A549 (cell line): ENCODE measurements at regions of chr15 and their contacts with region 1.

Region 1: DNA sequence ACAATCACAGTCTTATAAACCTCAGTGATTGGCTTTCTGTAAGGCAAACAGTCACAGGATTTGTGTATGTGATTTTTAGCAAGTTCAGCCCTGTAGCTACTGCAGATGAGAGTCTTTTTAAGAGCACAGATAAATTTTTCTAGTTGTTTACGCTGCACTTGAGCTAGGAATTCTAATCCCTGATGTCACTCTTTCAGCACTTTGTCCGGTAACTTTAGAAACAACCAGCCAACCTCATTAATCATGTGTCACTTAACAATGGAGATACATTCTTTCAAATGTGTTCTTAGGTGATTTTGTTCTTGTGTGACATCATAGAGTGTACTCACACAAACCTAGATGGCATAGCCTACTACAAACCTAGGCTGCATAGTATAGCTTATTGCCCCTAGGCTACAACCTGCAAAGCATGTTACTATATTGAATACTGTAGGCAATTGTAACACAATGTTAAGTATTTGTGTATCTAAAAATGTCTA is 36.8 kb upstream of the GOLGA6L2 start:
- DNase-seq: peak; percentile 31 to 95
- ATAC-seq: peak; percentile 80 to 92
- H3K4me3 ChIP-seq: no peak overlapping the region
- H3K27ac ChIP-seq: peak overlapping the region; percentile 80 to 82
- H3K4me1 ChIP-seq: peaks cover 36% of the 10 kb centered on the region
- CTCF ChIP-seq: no peak
- EP300 ChIP-seq: peak; percentile 82 to 83; a peak in 4 of 5 replicates
- POLR2A ChIP-seq: no peak
- RAD21 ChIP-seq: peak; percentile 13 to 15; a peak in 1 of 5 replicates

Region 2: GRCh38 chr15:23467110-23467600 is 16.7 kb before region 1 on chr15:
- CTCF ChIA-PET with region 1: interaction called, 10 read pairs
- POLR2A ChIA-PET with region 1: no interaction called
- DNase-seq: peak; percentile 44 to 65
- ATAC-seq: peak; percentile 85 to 86; a peak in 5 of 6 replicates
- H3K4me3 ChIP-seq: no peak overlapping the region
- H3K27ac ChIP-seq: peak overlapping the region; percentile 5 to 61; a peak in 2 of 6 replicates
- H3K4me1 ChIP-seq: peaks cover 12% of the 10 kb centered on the region
- CTCF ChIP-seq: peak; percentile 78
- EP300 ChIP-seq: no peak
- POLR2A ChIP-seq: no peak
- RAD21 ChIP-seq: peak; percentile 82 to 90

Region 3: DNA sequence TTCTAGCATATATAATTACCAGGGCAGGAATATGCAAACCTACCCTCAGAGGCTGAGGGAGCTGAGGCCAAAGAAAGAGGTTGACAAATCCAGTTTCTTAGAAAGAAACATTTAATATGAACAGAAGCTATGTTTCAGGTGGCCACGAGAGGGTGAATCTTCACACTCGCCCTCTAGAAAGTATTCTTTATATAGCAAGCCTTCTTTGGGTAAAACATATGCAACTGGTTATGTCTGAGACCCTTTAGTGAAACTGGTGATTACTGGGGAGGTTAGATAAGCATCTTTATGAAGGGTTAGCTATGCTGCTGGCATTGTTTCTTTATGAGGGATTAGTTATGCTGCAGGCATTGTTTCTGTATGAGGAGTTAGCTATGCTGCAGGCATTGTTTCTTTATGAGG is 13.9 kb after region 1 on chr15:
- CTCF ChIA-PET with region 1: interaction called, 11 read pairs
- POLR2A ChIA-PET with region 1: no interaction called
- DNase-seq: peak in 1 of 2 experiments; percentile 54
- ATAC-seq: peak; percentile 43 to 73; a peak in 4 of 6 replicates
- H3K4me3 ChIP-seq: no peak overlapping the region
- H3K27ac ChIP-seq: no peak overlapping the region
- H3K4me1 ChIP-seq: no peaks in the 10 kb centered on the region
- CTCF ChIP-seq: peak; percentile 59
- EP300 ChIP-seq: no peak
- POLR2A ChIP-seq: no peak
- RAD21 ChIP-seq: peak; percentile 58 to 62